ENCODE measurements at regions of chr21 and their contacts with region 1.

Region 1: GRCh38 chr21:15064576-15065391 is at the start of gene NRIP1:
- DNase-seq: peak; percentile 71
- H3K4me3 Mint-ChIP-seq: peak within 1 kb of the TSS; percentile 90
- H3K27ac Mint-ChIP-seq: peak within 1 kb of the TSS; percentile 94
- H3K4me1 Mint-ChIP-seq: peaks cover 36% of the 10 kb centered on the region
- H3K27me3 Mint-ChIP-seq: no peaks in the 10 kb centered on the region
- total RNA-seq, gene NRIP1: 6.1 to 6.5 TPM

Region 2: DNA sequence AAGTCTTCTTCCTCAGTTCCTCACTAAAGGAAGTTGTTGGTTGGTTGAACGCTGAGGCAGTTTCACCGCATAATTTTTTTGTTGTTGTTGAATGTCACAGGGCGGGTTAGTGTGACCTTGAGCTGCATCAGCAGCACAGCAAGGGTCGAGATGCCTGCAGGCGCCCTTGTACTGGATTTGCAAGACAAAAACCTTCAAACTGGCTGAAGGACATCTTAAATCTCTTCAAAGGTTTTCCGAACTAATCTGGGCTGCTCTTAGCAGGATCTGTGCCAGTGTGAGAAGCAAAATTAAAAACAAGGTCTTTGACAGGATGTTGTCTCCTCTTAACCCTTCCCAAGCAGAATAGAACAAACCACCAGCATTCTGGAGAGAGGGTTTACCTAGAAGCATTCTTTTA is 59.4 kb before region 1 on chr21:
- CTCF ChIA-PET with region 1: interaction called, 3 read pairs
- intact Hi-C with region 1: loop called (anchors 2 kb)
- DNase-seq: peak; percentile 25
- H3K4me3 Mint-ChIP-seq: peak overlapping the region; percentile 66
- H3K27ac Mint-ChIP-seq: peak overlapping the region; percentile 42
- H3K4me1 Mint-ChIP-seq: peaks cover 47% of the 10 kb centered on the region
- H3K27me3 Mint-ChIP-seq: no peaks in the 10 kb centered on the region

Region 3: DNA sequence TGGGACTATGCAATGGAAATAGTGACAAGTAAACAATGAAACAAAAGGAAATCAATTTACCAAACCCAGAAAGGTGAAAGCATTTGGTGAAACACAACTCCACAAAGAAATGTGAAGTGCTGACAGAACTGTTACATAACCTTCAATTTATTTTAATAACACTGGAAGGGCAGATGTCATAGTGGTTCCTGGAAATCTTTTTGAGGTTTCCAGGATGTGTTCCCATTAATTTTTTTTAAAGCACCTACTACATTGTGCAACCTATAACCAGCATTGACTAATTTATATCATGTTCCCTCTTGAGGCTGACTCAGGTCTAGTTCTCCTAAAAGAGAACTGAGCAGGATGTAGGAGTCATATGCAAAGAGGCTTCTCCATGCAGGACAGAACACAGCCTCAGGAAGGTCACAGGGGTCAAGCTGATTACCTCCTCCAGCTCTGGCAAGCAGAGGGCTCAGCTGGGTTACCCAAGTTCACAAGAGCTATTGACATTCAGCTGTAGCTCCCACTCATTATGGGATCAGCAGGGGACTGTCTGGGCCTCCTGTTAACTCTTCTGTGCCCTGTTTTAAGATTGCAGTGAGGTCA is 157.1 kb after region 1 on chr21:
- CTCF ChIA-PET with region 1: no interaction called
- intact Hi-C with region 1: loop called (anchors 1 kb)
- DNase-seq: peak; percentile 48
- H3K4me3 Mint-ChIP-seq: no peak overlapping the region
- H3K27ac Mint-ChIP-seq: peak overlapping the region; percentile 30
- H3K4me1 Mint-ChIP-seq: peaks cover 29% of the 10 kb centered on the region
- H3K27me3 Mint-ChIP-seq: peaks cover 4% of the 10 kb centered on the region

Region 4: DNA sequence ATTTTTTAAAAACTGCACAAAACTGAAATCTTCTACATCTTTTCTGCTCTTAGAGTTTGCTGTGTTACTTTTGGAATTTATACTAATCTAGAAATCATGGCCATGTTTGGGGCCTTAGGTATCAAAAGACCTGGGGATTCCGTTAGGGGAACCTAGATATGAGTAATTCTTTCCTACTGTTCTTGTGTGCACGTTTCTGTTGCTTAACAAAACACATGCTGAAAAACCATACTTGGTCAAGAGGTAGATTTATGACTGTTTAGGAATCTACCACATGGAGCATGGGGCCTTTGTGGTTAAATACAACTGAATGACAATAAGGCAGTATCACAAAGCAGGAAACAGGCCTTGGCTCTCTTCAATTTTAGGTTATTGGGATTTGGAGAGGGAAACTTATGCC is 373.1 kb after region 1 on chr21:
- CTCF ChIA-PET with region 1: no interaction called
- intact Hi-C with region 1: loop called (anchors 2 kb)
- DNase-seq: peak; percentile 28
- H3K4me3 Mint-ChIP-seq: no peak overlapping the region
- H3K27ac Mint-ChIP-seq: peak overlapping the region; percentile 36
- H3K4me1 Mint-ChIP-seq: peaks cover 19% of the 10 kb centered on the region
- H3K27me3 Mint-ChIP-seq: no peaks in the 10 kb centered on the region

Region 5: DNA sequence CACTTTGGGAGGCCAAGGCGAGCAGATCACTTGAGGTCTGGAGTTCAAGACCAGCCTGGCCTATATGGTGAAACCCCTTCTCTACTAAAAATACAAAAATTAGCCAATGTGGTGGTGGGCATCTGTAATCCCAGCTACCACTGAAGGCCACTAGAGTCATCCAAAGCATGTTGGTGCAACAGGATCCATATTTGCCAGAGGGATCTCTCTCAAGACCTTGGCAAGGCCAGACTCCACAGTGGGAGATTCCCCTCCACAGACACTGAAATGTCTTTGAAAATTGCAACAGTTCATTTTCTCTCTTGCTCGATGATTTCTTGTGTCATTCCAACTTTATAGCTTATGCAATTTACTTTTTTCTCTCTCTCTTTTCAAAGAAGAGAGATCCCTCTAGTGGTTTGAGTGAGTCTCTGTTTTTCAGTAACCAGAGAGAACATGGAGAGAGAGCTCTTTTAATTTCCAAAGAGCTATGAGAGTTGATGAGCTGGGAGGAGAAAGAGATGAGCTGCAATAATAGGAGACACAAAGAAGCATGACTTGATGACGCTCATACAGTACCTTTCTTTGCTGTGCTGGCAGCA is 488.2 kb after region 1 on chr21:
- CTCF ChIA-PET with region 1: no interaction called
- intact Hi-C with region 1: loop called (anchors 1 kb)
- DNase-seq: no peak
- H3K4me3 Mint-ChIP-seq: no peak overlapping the region
- H3K27ac Mint-ChIP-seq: no peak overlapping the region
- H3K4me1 Mint-ChIP-seq: peaks cover 15% of the 10 kb centered on the region
- H3K27me3 Mint-ChIP-seq: no peaks in the 10 kb centered on the region

Region 6: GRCh38 chr21:15826147-15826780 is 761.5 kb after region 1 on chr21:
- CTCF ChIA-PET with region 1: no interaction called
- intact Hi-C with region 1: loop called (anchors 5 kb)
- DNase-seq: peak; percentile 53
- H3K4me3 Mint-ChIP-seq: no peak overlapping the region
- H3K27ac Mint-ChIP-seq: no peak overlapping the region
- H3K4me1 Mint-ChIP-seq: peaks cover 28% of the 10 kb centered on the region
- H3K27me3 Mint-ChIP-seq: no peaks in the 10 kb centered on the region